ENCODE measurements at regions of chr17 and their contacts with region 1.

Region 1: GRCh38 chr17:33154869-33155455 is 138.1 kb downstream of the ASIC2 start:
- DNase-seq: no peak
- ATAC-seq: no peak

Region 2: DNA sequence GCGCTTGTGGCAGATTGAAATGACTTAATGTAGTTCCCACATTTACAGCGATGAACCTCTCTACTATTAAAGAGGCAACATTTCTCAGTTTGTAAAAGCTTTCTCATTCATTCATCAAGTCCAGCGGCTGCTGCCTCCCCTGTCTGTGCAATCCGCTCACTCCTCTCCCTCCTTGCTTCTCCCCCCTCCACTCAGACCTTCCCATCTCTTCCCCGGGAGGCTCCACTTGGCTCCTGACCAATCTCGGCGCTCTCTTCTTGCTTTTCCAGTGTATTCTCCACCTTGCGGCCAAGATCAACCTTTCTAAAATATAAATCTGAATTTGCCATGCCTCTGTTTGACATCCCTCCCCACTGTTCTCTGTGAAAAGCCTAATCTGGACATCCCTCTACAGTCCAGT is 20.6 kb after region 1 on chr17:
- intact Hi-C with region 1: loop called (anchors 1 kb)
- DNase-seq: no peak
- ATAC-seq: no peak

Region 3: GRCh38 chr17:34076743-34077631 is 922.0 kb after region 1 on chr17:
- intact Hi-C with region 1: no loop called
- DNase-seq: no peak
- ATAC-seq: no peak

Measured in sciatic nerve (tissue), 2 donors.